ENCODE measurements at regions of chr10 and their contacts with region 1.

Region 1: GRCh38 chr10:30534465-30535144 is 94.9 kb downstream of the LYZL2 start:
- DNase-seq: peak; percentile 77
- H3K4me3 Mint-ChIP-seq: no peak overlapping the region
- H3K27ac Mint-ChIP-seq: no peak overlapping the region
- H3K4me1 Mint-ChIP-seq: peaks cover 6% of the 10 kb centered on the region
- H3K27me3 Mint-ChIP-seq: no peaks in the 10 kb centered on the region
- CTCF ChIP-seq: peak; percentile 79

Region 2: GRCh38 chr10:30392564-30392990 is 142.0 kb before region 1 on chr10:
- CTCF ChIA-PET with region 1: interaction called, 26 read pairs
- POLR2A ChIA-PET with region 1: no interaction called
- intact Hi-C with region 1: loop called (anchors 1 kb)
- DNase-seq: peak; percentile 77
- H3K4me3 Mint-ChIP-seq: no peak overlapping the region
- H3K27ac Mint-ChIP-seq: no peak overlapping the region
- H3K4me1 Mint-ChIP-seq: peaks cover 14% of the 10 kb centered on the region
- H3K27me3 Mint-ChIP-seq: no peaks in the 10 kb centered on the region
- CTCF ChIP-seq: peak; percentile 98

Region 3: GRCh38 chr10:30413996-30414576 is 120.5 kb before region 1 on chr10:
- CTCF ChIA-PET with region 1: interaction called, 4 read pairs
- POLR2A ChIA-PET with region 1: no interaction called
- intact Hi-C with region 1: loop called (anchors 1 kb)
- DNase-seq: peak; percentile 76
- H3K4me3 Mint-ChIP-seq: no peak overlapping the region
- H3K27ac Mint-ChIP-seq: no peak overlapping the region
- H3K4me1 Mint-ChIP-seq: no peaks in the 10 kb centered on the region
- H3K27me3 Mint-ChIP-seq: no peaks in the 10 kb centered on the region
- CTCF ChIP-seq: peak; percentile 62

Region 4: DNA sequence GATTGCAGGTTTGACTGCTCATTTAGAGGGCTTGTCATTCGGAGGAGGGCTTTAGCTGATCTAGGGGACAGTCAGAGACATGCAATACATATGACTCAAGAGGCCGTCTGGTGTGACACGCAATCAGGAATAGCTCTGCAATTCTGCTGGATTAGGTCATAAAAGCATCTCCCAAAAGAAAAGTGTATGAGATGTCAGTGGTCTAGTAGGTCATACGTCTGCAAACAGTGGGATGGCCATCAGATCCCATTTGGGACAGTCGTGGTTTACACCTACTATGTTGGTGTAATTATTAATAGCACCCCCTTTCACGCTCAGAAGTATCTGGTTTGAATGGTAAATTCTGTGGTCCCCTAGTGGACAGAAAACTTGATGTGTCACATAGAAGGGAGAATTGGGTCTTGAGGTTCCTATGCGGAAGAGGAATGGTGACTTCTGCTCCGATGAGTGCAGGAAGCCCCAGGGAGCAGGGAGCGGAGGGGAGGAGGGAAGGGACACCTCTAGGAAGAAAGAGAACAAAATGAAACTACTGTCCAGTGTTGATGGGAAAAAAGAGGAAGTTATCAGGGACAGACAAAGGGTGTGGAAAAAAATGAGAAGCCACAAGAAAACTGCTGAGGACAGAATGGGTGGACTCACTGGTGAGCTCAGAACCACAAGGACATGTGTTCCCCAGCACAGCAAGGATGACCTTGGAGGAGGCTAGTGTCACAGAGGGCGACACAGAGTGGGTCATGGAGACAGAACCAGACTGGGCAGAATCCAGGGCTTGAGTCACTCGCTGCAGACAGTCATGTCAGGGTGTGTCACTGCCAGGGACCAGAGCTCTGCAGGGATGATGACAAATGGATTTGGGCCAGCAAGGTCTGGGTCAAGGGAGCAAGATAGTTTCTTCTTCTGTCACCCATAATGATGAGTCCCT is 40.7 kb before region 1 on chr10:
- CTCF ChIA-PET with region 1: no interaction called
- POLR2A ChIA-PET with region 1: interaction called, 3 read pairs
- intact Hi-C with region 1: loop called (anchors 5 kb)
- DNase-seq: peak; percentile 43
- H3K4me3 Mint-ChIP-seq: no peak overlapping the region
- H3K27ac Mint-ChIP-seq: no peak overlapping the region
- H3K4me1 Mint-ChIP-seq: peaks cover 32% of the 10 kb centered on the region
- H3K27me3 Mint-ChIP-seq: no peaks in the 10 kb centered on the region
- CTCF ChIP-seq: no peak

Region 5: DNA sequence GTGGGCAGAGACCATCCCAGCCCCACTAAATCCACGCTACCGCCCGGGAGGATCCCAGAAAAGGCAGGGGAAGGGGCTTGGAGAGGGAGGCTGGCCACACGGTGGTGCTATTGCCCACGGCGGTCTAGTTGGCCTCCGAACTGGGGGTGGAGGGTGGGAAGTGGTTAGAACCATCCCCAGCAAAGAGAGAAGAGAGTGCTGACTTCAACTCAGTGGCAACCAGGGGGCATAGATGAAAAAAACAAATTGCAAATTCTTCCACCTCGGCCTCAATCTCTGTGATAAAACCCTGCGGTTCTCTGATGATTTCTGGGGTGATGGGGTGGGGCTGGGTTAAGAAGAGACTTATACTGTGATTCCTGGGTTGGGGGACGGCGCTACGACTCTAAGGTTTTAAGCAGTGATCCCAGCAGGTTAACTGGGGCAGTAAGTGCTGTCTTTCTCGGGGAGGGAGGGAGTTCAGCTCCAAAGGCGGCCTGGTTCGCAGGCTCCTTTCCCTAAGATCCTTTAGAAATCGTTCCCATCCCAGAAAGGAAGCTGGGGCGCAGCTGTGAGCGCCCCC is 249.4 kb after region 1 on chr10:
- CTCF ChIA-PET with region 1: no interaction called
- POLR2A ChIA-PET with region 1: no interaction called
- intact Hi-C with region 1: no loop called
- DNase-seq: peak; percentile 54
- H3K4me3 Mint-ChIP-seq: no peak overlapping the region
- H3K27ac Mint-ChIP-seq: no peak overlapping the region
- H3K4me1 Mint-ChIP-seq: peaks cover 24% of the 10 kb centered on the region
- H3K27me3 Mint-ChIP-seq: no peaks in the 10 kb centered on the region
- CTCF ChIP-seq: peak; percentile 73